ENCODE measurements at regions of chr3 and their contacts with region 1.

Region 1: GRCh38 chr3:99753268-99753975 is 64.2 kb upstream of the CMSS1 start:
- DNase-seq: peak in 6 of 9 donors; percentile 13 to 27 (median 22)
- ATAC-seq: peak; percentile 66
- H3K4me3 ChIP-seq: no peak overlapping the region
- H3K4me3 Mint-ChIP-seq: no peak overlapping the region
- H3K27ac ChIP-seq: no peak overlapping the region
- H3K27ac Mint-ChIP-seq: no peak overlapping the region
- H3K4me1 ChIP-seq: no peaks in the 10 kb centered on the region
- H3K4me1 Mint-ChIP-seq: no peaks in the 10 kb centered on the region
- H3K27me3 ChIP-seq: no peaks in the 10 kb centered on the region
- H3K27me3 Mint-ChIP-seq: peaks cover 0 to 37% (median 14%) of the 10 kb centered on the region in 5 donors

Region 2: DNA sequence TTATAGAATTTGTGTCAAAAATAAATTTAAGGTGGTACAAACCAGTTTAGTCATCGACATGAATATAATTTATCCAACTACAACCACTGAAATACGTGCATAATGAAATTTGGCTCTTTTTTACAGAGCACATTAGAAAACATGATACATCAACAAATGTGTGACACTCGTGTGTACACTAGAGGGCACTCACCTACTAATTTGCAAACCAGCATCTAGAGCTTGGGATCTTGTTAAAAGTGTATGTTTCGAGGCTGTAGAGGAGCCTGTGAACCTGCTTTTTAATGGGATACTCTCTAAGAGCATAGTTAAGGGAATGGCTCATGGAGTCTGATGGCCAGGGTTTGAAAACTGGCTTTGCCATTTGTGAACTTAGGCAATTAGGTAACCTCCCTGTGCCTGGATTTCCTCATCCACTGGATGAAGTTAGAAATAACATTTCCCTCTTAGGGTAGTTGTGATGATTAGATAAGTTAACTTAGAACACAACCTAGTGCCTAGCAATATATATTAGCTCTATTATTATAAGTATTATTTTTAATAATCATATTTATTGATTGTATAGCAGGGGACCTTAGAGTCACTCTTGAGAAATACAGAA is 1151.2 kb before region 1 on chr3:
- CTCF ChIA-PET with region 1: interaction called, 3 read pairs
- POLR2A ChIA-PET with region 1: no interaction called
- intact Hi-C with region 1: loop called in 1 of 2 experiments (anchors 1 kb)
- DNase-seq: peak in 5 of 9 donors; percentile 29 to 48 (median 35)
- ATAC-seq: peak; percentile 80
- H3K4me3 ChIP-seq: no peak overlapping the region
- H3K4me3 Mint-ChIP-seq: no peak overlapping the region
- H3K27ac ChIP-seq: no peak overlapping the region
- H3K27ac Mint-ChIP-seq: no peak overlapping the region
- H3K4me1 ChIP-seq: no peaks in the 10 kb centered on the region
- H3K4me1 Mint-ChIP-seq: peaks cover 0 to 10% (median 0%) of the 10 kb centered on the region in 7 donors
- H3K27me3 ChIP-seq: no peaks in the 10 kb centered on the region
- H3K27me3 Mint-ChIP-seq: peaks cover 9 to 22% (median 13%) of the 10 kb centered on the region in 5 donors

Region 3: GRCh38 chr3:99023590-99024192 is 729.7 kb before region 1 on chr3:
- CTCF ChIA-PET with region 1: no interaction called
- POLR2A ChIA-PET with region 1: no interaction called
- intact Hi-C with region 1: loop called (anchors 1 kb)
- DNase-seq: peak in 2 of 9 donors; percentile 2 to 3
- ATAC-seq: no peak
- H3K4me3 ChIP-seq: no peak overlapping the region
- H3K4me3 Mint-ChIP-seq: no peak overlapping the region
- H3K27ac ChIP-seq: no peak overlapping the region
- H3K27ac Mint-ChIP-seq: no peak overlapping the region
- H3K4me1 ChIP-seq: no peaks in the 10 kb centered on the region
- H3K4me1 Mint-ChIP-seq: no peaks in the 10 kb centered on the region
- H3K27me3 ChIP-seq: peaks cover 0 to 3% of the 10 kb centered on the region in 2 donors
- H3K27me3 Mint-ChIP-seq: peaks cover 0 to 29% (median 18%) of the 10 kb centered on the region in 5 donors

Region 4: DNA sequence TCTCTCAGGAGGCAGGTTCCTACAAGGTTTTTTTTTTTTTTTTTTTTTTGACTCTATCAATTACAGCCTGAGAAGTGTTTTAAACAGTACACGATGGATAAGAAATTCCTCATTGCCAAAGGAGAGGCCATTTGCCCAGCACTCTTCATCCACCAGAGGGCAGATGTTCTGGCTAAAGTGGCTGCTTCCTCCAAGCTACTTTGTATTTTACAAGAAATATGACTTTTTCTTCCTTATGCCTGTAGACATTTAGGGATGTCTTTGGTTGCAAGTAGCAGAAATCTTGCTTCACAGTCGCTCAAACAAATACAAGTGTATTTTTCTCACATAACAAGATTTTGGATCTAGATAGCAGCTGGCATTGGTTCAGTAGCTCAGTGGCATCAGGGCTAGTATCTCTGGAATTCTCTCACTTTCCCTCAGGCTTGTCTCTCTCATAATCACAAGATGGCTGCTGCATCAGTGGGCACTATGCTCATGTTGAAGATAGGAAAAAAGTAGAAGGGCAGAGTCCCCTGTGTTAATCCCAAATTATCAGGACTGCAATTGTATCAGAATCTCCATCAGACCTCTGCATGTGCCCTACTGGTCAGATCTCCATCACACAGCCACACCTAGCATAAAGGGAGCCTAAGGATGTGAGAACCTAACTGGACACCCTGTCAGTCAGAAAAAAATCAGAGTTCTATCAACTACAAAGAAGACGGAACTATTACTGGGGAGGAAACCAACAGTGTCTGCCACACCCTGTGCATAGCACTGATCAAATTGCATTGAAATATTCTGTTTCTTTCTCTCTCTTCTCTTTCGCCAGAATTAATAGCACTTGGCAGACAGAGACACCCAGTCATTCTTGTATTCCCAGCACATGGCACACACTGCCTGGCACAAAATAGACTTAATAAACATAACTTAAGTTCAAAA is 253.9 kb before region 1 on chr3:
- CTCF ChIA-PET with region 1: no interaction called
- POLR2A ChIA-PET with region 1: no interaction called
- intact Hi-C with region 1: loop called in 1 of 2 experiments (anchors 2 kb)
- DNase-seq: no peak
- ATAC-seq: no peak
- H3K4me3 ChIP-seq: no peak overlapping the region
- H3K4me3 Mint-ChIP-seq: no peak overlapping the region
- H3K27ac ChIP-seq: no peak overlapping the region
- H3K27ac Mint-ChIP-seq: no peak overlapping the region
- H3K4me1 ChIP-seq: no peaks in the 10 kb centered on the region
- H3K4me1 Mint-ChIP-seq: peaks cover 0 to 3% (median 0%) of the 10 kb centered on the region in 7 donors
- H3K27me3 ChIP-seq: no peaks in the 10 kb centered on the region
- H3K27me3 Mint-ChIP-seq: no peaks in the 10 kb centered on the region

Region 5: GRCh38 chr3:99645277-99646106 is 107.9 kb before region 1 on chr3:
- CTCF ChIA-PET with region 1: no interaction called
- POLR2A ChIA-PET with region 1: no interaction called
- intact Hi-C with region 1: loop called in 1 of 2 experiments (anchors 1 kb)
- DNase-seq: no peak
- ATAC-seq: no peak
- H3K4me3 ChIP-seq: no peak overlapping the region
- H3K4me3 Mint-ChIP-seq: no peak overlapping the region
- H3K27ac ChIP-seq: no peak overlapping the region
- H3K27ac Mint-ChIP-seq: no peak overlapping the region
- H3K4me1 ChIP-seq: no peaks in the 10 kb centered on the region
- H3K4me1 Mint-ChIP-seq: no peaks in the 10 kb centered on the region
- H3K27me3 ChIP-seq: no peaks in the 10 kb centered on the region
- H3K27me3 Mint-ChIP-seq: peaks cover 13 to 46% (median 34%) of the 10 kb centered on the region in 5 donors

Region 6: DNA sequence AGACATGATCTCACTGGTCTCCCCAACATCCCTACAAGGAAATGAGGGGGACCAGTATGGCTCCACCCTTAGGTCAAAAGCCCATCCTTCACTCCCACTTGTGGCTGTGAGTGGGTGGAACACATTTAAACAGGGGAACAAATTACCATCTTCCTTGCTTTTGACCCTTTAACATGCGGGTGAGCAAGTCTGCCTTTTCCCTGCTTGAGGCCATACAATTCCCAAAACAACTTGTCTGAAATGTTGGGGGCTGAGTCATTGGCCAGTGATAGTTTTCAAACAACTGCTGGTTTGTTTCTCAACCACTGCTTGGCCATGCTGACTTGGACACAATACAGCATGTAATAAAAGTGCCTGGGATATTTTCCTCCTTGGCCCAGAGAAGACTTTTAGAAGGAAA is 75.4 kb before region 1 on chr3:
- CTCF ChIA-PET with region 1: no interaction called
- POLR2A ChIA-PET with region 1: no interaction called
- intact Hi-C with region 1: no loop called
- DNase-seq: no peak
- ATAC-seq: no peak
- H3K4me3 ChIP-seq: no peak overlapping the region
- H3K4me3 Mint-ChIP-seq: no peak overlapping the region
- H3K27ac ChIP-seq: no peak overlapping the region
- H3K27ac Mint-ChIP-seq: no peak overlapping the region
- H3K4me1 ChIP-seq: no peaks in the 10 kb centered on the region
- H3K4me1 Mint-ChIP-seq: no peaks in the 10 kb centered on the region
- H3K27me3 ChIP-seq: no peaks in the 10 kb centered on the region
- H3K27me3 Mint-ChIP-seq: peaks cover 0 to 25% (median 13%) of the 10 kb centered on the region in 5 donors

Region 7: DNA sequence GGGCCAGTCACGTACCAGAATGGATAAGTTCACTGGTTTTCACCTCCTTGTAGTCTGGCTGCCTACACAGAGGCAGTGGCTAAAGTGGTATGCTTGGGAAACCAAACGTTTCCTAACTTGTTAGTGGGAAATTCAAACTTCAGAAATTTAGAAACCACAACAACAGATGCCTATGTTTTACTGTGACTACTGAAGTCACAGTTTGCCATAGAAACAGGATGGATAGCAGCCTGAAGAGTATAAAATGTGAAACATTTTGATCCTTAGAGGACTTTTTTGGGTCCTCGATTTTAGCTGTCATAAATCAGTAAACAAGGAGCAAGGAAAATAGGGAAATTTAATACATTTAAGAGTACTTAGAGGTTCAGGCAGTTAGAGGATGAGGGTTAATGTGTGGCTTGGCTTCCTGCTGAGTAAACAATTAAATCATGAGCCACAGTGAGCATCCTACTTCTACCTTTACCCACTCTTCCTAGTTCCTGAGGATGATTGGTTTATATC is 112.9 kb after region 1 on chr3:
- CTCF ChIA-PET with region 1: no interaction called
- POLR2A ChIA-PET with region 1: no interaction called
- intact Hi-C with region 1: no loop called
- DNase-seq: peak in 1 of 9 donors; percentile 28
- ATAC-seq: peak; percentile 42
- H3K4me3 ChIP-seq: no peak overlapping the region
- H3K4me3 Mint-ChIP-seq: peak overlapping the region in 2 of 10 donors; percentile 19 to 79
- H3K27ac ChIP-seq: no peak overlapping the region
- H3K27ac Mint-ChIP-seq: peak overlapping the region in 2 of 9 donors; percentile 70 to 89
- H3K4me1 ChIP-seq: peaks cover 0 to 8% of the 10 kb centered on the region in 2 donors
- H3K4me1 Mint-ChIP-seq: peaks cover 17 to 75% (median 28%) of the 10 kb centered on the region in 7 donors
- H3K27me3 ChIP-seq: no peaks in the 10 kb centered on the region
- H3K27me3 Mint-ChIP-seq: no peaks in the 10 kb centered on the region

Measured in naive thymus-derived CD4-positive, alpha-beta T cell (primary cell).